ENCODE measurements at regions of chr18 and their contacts with region 1.

Region 1: DNA sequence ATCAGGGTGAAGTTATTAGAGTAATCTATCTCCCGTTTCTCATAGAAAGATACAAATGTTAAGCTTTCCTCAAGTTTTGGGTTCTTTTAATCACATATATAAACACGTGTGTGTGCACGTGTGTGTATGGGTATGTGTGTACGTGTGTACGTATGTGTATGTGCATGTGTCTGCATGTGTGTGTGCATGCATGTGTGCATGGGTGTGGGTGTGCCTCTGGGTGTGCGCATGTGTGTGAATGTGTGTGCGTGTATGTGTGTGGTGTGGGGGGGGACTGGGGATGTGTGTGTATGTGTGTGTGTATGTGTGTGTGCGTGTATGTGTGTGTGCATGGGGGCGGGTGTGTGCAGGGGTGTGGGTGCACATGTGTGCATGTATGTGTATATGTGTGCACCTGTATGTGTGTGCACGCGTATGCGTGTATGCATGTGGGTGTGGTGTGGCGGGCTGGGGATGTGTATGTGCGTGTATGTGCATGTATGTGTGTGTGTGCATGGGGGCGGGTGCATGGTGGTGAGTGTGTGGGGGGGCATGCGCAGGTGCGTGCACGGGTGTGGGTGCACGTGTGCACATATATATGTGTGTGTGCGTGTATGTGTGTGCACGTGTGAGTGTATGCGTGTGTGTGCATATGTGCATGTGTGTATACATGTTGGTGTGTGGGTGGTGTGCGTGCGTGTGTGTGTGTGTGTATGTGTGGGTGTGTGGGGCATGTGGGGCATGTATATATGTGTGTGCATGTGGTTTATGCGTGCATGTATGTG is 304.0 kb downstream of the MBD2 start:
- DNase-seq: no peak
- H3K4me3 ChIP-seq: no peak overlapping the region
- H3K27ac ChIP-seq: no peak overlapping the region
- H3K4me1 ChIP-seq: no peaks in the 10 kb centered on the region
- H3K27me3 ChIP-seq: no peaks in the 10 kb centered on the region
- CTCF ChIP-seq: no peak

Region 2: GRCh38 chr18:53790827-53791226 is 129.7 kb before region 1 on chr18:
- CTCF ChIA-PET with region 1: no interaction called
- POLR2A ChIA-PET with region 1: interaction called, 13 read pairs
- intact Hi-C with region 1: no loop called
- DNase-seq: peak; percentile 93
- H3K4me3 ChIP-seq: no peak overlapping the region
- H3K27ac ChIP-seq: no peak overlapping the region
- H3K4me1 ChIP-seq: peaks cover 21% of the 10 kb centered on the region
- H3K27me3 ChIP-seq: no peaks in the 10 kb centered on the region
- CTCF ChIP-seq: no peak

Region 3: DNA sequence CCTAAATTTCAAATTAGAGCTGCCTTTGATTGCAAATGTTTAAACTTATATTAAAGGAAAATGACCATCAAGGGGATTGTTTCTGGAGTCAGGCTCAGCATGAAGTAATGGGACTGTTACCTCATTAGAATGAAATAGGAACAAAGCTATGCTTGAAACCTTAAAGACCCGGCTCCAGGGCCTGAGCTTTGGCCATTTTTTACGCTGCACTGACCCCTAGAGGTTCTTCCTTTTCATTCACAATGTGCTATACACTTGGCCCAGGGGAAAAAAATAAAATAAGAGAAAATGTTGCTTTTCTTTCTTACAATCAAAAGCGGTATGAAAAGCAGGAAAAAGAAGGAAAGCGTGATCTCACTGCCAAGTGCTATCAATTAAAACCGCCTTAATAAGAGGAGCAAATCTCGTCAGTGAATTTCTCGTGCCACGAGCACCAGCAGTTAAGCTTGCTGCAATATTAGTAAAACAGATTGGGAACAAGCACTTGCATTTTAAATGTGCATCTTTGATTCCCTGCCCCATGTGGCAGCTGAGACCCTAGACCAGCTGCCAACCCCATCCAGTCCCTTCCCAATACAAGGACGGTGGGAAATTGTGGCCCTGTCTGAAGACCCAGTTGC is 207.4 kb after region 1 on chr18:
- CTCF ChIA-PET with region 1: no interaction called
- POLR2A ChIA-PET with region 1: no interaction called
- intact Hi-C with region 1: no loop called
- DNase-seq: peak; percentile 66
- H3K4me3 ChIP-seq: no peak overlapping the region
- H3K27ac ChIP-seq: no peak overlapping the region
- H3K4me1 ChIP-seq: peaks cover 3% of the 10 kb centered on the region
- H3K27me3 ChIP-seq: no peaks in the 10 kb centered on the region
- CTCF ChIP-seq: peak; percentile 62

Measured in A673 (cell line).